Adrenal gland (tissue), 19 donors: ENCODE measurements at regions of chr4 and their contacts with region 1.

Region 1: DNA sequence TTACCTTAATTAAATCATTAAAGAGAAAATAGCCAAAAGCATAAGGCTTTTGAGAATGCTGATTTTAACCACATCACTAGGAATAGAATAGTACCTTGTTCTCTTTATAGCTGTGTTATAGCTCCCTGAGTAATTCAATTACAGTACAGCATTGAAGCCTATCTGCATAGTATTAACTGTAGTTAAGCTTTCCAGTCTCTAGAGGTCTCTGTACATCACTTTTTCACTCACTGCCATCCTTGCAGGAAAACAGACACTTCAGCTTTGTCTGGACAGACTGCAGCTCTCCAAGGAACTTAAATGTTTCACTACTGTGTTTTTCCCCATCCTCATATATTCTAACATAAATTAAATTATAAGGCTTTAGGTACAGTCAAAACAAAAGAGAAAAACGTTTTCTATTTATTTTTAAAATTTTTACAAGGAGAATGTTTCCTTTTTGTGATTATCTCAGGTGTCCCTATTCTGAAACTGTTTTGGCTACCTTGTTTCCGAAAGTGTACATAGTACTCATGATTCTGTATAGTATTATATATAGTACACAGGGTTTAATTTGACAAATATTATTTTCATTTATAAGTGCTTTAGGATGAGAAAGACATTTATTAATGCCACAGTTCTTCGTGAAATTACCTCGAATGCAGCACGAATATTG is 407.9 kb downstream of the PCDH18 start:
- DNase-seq: peak in 1 of 7 donors; percentile 7
- H3K4me3 ChIP-seq: peak overlapping the region in 1 of 4 donors; percentile 41
- H3K27ac ChIP-seq: no peak overlapping the region
- H3K4me1 ChIP-seq: no peaks in the 10 kb centered on the region
- H3K27me3 ChIP-seq: no peaks in the 10 kb centered on the region
- CTCF ChIP-seq: peak; percentile 31 to 66 (median 55)
- POLR2A ChIP-seq: no peak

Region 2: DNA sequence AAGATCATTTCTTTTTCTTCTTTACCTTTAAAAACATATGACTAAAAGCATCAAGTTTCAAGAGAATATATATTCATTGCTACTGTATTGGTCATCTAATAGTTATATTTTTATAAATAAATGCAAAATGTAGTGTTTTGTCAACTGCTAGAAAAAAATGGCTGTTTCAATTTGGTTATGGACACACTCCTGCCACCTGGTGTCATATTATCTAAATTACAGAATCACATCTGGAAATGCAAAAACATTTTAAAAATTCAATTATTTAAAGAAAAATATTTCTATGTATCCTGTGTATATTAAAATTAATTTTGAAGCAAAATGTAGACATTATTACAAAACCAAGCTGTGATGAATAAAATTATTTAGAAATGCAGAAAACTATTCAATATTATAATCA is 737.3 kb after region 1 on chr4:
- intact Hi-C with region 1: loop called in 1 of 2 experiments (anchors 10 kb)
- DNase-seq: no peak
- H3K4me3 ChIP-seq: no peak overlapping the region
- H3K27ac ChIP-seq: no peak overlapping the region
- H3K4me1 ChIP-seq: no peaks in the 10 kb centered on the region
- H3K27me3 ChIP-seq: no peaks in the 10 kb centered on the region
- CTCF ChIP-seq: peak; percentile 22 to 57 (median 45)
- POLR2A ChIP-seq: no peak